ENCODE measurements at regions of chr9 and their contacts with region 1.

Region 1: GRCh38 chr9:26744191-26744965 is 148.2 kb downstream of the CAAP1 start:
- DNase-seq: peak in 2 of 4 donors; percentile 6 to 13
- ATAC-seq: peak; percentile 35
- H3K4me3 ChIP-seq: no peak overlapping the region
- H3K27ac ChIP-seq: no peak overlapping the region
- H3K4me1 ChIP-seq: peaks cover 0 to 5% of the 10 kb centered on the region in 2 donors
- H3K27me3 ChIP-seq: no peaks in the 10 kb centered on the region
- CTCF ChIP-seq: peak; percentile 72 to 85

Region 2: GRCh38 chr9:26856413-26857032 is 112.1 kb after region 1 on chr9:
- intact Hi-C with region 1: loop called in 1 of 2 experiments (anchors 10 kb)
- DNase-seq: peak in 1 of 4 donors; percentile 15
- ATAC-seq: peak; percentile 60
- H3K4me3 ChIP-seq: no peak overlapping the region
- H3K27ac ChIP-seq: no peak overlapping the region
- H3K4me1 ChIP-seq: no peaks in the 10 kb centered on the region
- H3K27me3 ChIP-seq: no peaks in the 10 kb centered on the region
- CTCF ChIP-seq: peak in 1 of 2 donors; percentile 28

Region 3: GRCh38 chr9:26975693-26976059 is 231.3 kb after region 1 on chr9:
- intact Hi-C with region 1: loop called in 1 of 2 experiments (anchors 10 kb)
- DNase-seq: peak in 1 of 4 donors; percentile 11
- ATAC-seq: no peak
- H3K4me3 ChIP-seq: no peak overlapping the region
- H3K27ac ChIP-seq: no peak overlapping the region
- H3K4me1 ChIP-seq: no peaks in the 10 kb centered on the region
- H3K27me3 ChIP-seq: no peaks in the 10 kb centered on the region
- CTCF ChIP-seq: peak; percentile 9 to 33

Measured in left lung (tissue), 14 donors.